H1 (cell line): ENCODE measurements at regions of chr12 and their contacts with region 1.

Region 1: GRCh38 chr12:128531170-128531569 is 264.2 kb downstream of the TMEM132C start:
- DNase-seq: no peak
- H3K4me3 ChIP-seq: no peak overlapping the region
- H3K27ac ChIP-seq: no peak overlapping the region
- H3K4me1 ChIP-seq: peaks cover 0 to 2% (median 0%) of the 10 kb centered on the region in 4 experiments; a peak in 1 of 7 replicates
- H3K27me3 ChIP-seq: no peaks in the 10 kb centered on the region
- CTCF ChIP-seq: peak in 2 of 3 experiments; percentile 49 to 69; a peak in 3 of 4 replicates
- EP300 ChIP-seq: no peak
- POLR2A ChIP-seq: no peak
- RAD21 ChIP-seq: peak; percentile 85

Region 2: GRCh38 chr12:128513831-128514230 is 17.3 kb before region 1 on chr12:
- CTCF ChIA-PET with region 1: interaction called, 10 read pairs
- POLR2A ChIA-PET with region 1: no interaction called
- DNase-seq: no peak
- H3K4me3 ChIP-seq: no peak overlapping the region
- H3K27ac ChIP-seq: no peak overlapping the region
- H3K4me1 ChIP-seq: peaks cover 0 to 9% (median 3%) of the 10 kb centered on the region in 4 experiments; a peak in 5 of 7 replicates
- H3K27me3 ChIP-seq: no peaks in the 10 kb centered on the region; a peak in 1 of 7 replicates
- CTCF ChIP-seq: no peak
- EP300 ChIP-seq: no peak
- POLR2A ChIP-seq: no peak
- RAD21 ChIP-seq: no peak

Region 3: GRCh38 chr12:128543460-128543859 is 12.3 kb after region 1 on chr12:
- CTCF ChIA-PET with region 1: interaction called, 18 read pairs
- POLR2A ChIA-PET with region 1: no interaction called
- DNase-seq: no peak
- H3K4me3 ChIP-seq: no peak overlapping the region
- H3K27ac ChIP-seq: no peak overlapping the region
- H3K4me1 ChIP-seq: no peaks in the 10 kb centered on the region
- H3K27me3 ChIP-seq: peaks cover 0 to 2% (median 0%) of the 10 kb centered on the region in 4 experiments; a peak in 1 of 7 replicates
- CTCF ChIP-seq: peak in 2 of 3 experiments; percentile 20 to 39; a peak in 3 of 4 replicates
- EP300 ChIP-seq: no peak
- POLR2A ChIP-seq: no peak
- RAD21 ChIP-seq: peak; percentile 64 to 68